Natural killer cell (primary cell): ENCODE measurements at regions of chr17 and their contacts with region 1.

Region 1: GRCh38 chr17:32519228-32520103 is 32.7 kb downstream of the CDK5R1 start:
- DNase-seq: peak; percentile 69 to 85
- ATAC-seq: peak; percentile 49 to 71 (median 64)
- H3K4me3 ChIP-seq: peak overlapping the region; percentile 24
- H3K4me3 Mint-ChIP-seq: peak overlapping the region; percentile 90
- H3K27ac ChIP-seq: peak overlapping the region; percentile 91
- H3K27ac Mint-ChIP-seq: peak overlapping the region; percentile 91 to 98
- H3K4me1 ChIP-seq: peaks cover 88% of the 10 kb centered on the region
- H3K4me1 Mint-ChIP-seq: peaks cover 80 to 82% of the 10 kb centered on the region in 2 donors
- H3K27me3 ChIP-seq: no peaks in the 10 kb centered on the region
- H3K27me3 Mint-ChIP-seq: no peaks in the 10 kb centered on the region
- CTCF ChIP-seq: no peak

Region 2: GRCh38 chr17:32503251-32504165 is 16.0 kb before region 1 on chr17:
- intact Hi-C with region 1: loop called (anchors 1 kb)
- DNase-seq: peak in 1 of 2 donors; percentile 83
- ATAC-seq: peak; percentile 77 to 91 (median 88)
- H3K4me3 ChIP-seq: no peak overlapping the region
- H3K4me3 Mint-ChIP-seq: peak overlapping the region; percentile 77
- H3K27ac ChIP-seq: peak overlapping the region; percentile 95
- H3K27ac Mint-ChIP-seq: peak overlapping the region; percentile 95 to 98
- H3K4me1 ChIP-seq: peaks cover 71% of the 10 kb centered on the region
- H3K4me1 Mint-ChIP-seq: peaks cover 58% of the 10 kb centered on the region in 2 donors
- H3K27me3 ChIP-seq: no peaks in the 10 kb centered on the region
- H3K27me3 Mint-ChIP-seq: no peaks in the 10 kb centered on the region
- CTCF ChIP-seq: no peak

Region 3: GRCh38 chr17:32551186-32551955 is 31.9 kb after region 1 on chr17:
- intact Hi-C with region 1: loop called (anchors 5 kb)
- DNase-seq: peak in 1 of 2 donors; percentile 43
- ATAC-seq: peak; percentile 60 to 92 (median 88)
- H3K4me3 ChIP-seq: no peak overlapping the region
- H3K4me3 Mint-ChIP-seq: peak overlapping the region; percentile 29
- H3K27ac ChIP-seq: peak overlapping the region; percentile 28
- H3K27ac Mint-ChIP-seq: peak overlapping the region; percentile 86 to 87
- H3K4me1 ChIP-seq: peaks cover 33% of the 10 kb centered on the region
- H3K4me1 Mint-ChIP-seq: peaks cover 47 to 50% of the 10 kb centered on the region in 2 donors
- H3K27me3 ChIP-seq: no peaks in the 10 kb centered on the region
- H3K27me3 Mint-ChIP-seq: no peaks in the 10 kb centered on the region
- CTCF ChIP-seq: no peak

Region 4: DNA sequence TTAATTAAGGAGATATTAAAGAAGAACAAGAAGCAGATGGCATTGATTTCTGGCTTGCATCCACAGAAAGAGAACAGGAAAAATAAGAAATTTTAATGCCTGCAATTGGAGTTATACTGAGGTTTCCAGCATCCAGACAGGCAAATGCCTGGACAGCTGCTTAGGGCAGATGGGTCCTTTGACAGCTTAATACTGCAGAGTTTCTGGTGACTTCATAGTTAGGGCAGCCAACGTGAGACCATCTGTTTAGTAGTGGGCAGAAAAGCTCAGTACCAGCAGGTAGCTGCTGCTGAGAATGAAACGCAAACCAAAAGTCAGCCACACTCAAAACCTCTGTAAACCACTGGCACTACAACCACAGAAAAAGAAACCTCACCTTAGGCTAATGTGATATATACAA is 77.2 kb after region 1 on chr17:
- intact Hi-C with region 1: no loop called
- DNase-seq: no peak
- ATAC-seq: peak; percentile 60 to 65 (median 63)
- H3K4me3 ChIP-seq: no peak overlapping the region
- H3K4me3 Mint-ChIP-seq: no peak overlapping the region
- H3K27ac ChIP-seq: no peak overlapping the region
- H3K27ac Mint-ChIP-seq: peak overlapping the region in 1 of 2 donors; percentile 3
- H3K4me1 ChIP-seq: peaks cover 8% of the 10 kb centered on the region
- H3K4me1 Mint-ChIP-seq: peaks cover 13 to 15% of the 10 kb centered on the region in 2 donors
- H3K27me3 ChIP-seq: no peaks in the 10 kb centered on the region
- H3K27me3 Mint-ChIP-seq: no peaks in the 10 kb centered on the region
- CTCF ChIP-seq: no peak

Region 5: DNA sequence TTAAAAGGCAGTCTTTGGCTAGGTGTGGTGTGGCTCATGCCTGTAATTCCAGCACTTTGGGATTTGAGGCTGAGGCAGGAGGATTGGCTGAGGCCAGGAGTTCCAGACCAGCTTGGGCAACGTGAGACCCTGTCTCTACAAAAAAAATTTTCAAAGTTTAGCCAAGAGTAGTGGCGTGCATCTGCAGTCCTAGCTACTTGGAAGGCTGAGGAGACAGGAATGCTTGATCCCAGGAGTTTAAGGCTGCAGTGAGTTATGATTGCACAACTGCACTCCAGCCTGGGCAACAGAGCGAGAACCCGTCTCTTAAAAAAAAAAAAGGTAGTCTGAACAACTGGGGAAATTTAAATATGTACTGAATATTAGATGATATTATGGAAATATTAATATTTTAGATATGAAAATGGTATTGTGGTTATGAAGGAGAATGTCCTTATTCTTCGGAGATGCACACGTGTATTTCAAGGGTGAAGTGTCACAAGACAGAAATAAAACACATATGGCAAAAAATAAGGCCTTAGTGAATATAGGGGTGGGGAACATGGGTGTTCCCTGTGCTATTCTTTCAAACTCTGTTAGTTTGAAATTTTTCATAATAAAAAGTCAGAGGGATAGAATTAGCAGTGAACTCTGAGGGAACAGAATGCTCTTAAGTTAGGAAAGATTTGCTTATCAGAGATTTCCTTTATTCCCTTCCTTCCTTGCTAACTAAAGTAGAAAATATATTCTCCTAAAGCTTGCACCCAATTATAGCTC is 112.1 kb after region 1 on chr17:
- intact Hi-C with region 1: no loop called
- DNase-seq: no peak
- ATAC-seq: no peak
- H3K4me3 ChIP-seq: no peak overlapping the region
- H3K4me3 Mint-ChIP-seq: no peak overlapping the region
- H3K27ac ChIP-seq: no peak overlapping the region
- H3K27ac Mint-ChIP-seq: no peak overlapping the region
- H3K4me1 ChIP-seq: no peaks in the 10 kb centered on the region
- H3K4me1 Mint-ChIP-seq: no peaks in the 10 kb centered on the region
- H3K27me3 ChIP-seq: no peaks in the 10 kb centered on the region
- H3K27me3 Mint-ChIP-seq: no peaks in the 10 kb centered on the region
- CTCF ChIP-seq: no peak